GM23248 (cell line): ENCODE measurements at regions of chr12 and their contacts with region 1.

Region 1: GRCh38 chr12:55619354-55620138 is 17.1 kb upstream of the OR10P1 start:
- DNase-seq: peak; percentile 91
- H3K4me3 ChIP-seq: no peak overlapping the region
- H3K27ac ChIP-seq: no peak overlapping the region
- H3K4me1 ChIP-seq: no peaks in the 10 kb centered on the region
- H3K27me3 ChIP-seq: peaks cover 18% of the 10 kb centered on the region

Region 2: DNA sequence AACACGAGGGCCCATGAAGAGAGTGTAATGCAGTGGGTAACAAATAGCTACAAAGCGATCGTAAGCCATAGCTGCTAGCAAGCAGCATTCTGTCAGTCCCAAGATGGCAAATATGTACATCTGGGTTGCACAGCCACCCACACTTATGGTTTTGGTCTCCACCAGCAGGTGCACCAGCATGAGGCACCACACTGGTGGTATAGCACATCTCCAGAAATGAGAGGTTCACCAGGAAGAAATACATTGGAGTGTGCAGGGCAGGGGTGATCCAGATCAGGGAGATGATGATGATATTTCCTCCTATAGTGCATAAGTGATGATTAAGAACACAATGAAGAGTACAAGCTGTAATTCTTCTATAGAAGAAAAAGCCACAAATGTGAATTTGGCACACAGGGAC is 425.2 kb before region 1 on chr12:
- in situ Hi-C with region 1: loop called (anchors 10 kb)
- DNase-seq: no peak
- H3K4me3 ChIP-seq: no peak overlapping the region
- H3K27ac ChIP-seq: no peak overlapping the region
- H3K4me1 ChIP-seq: no peaks in the 10 kb centered on the region
- H3K27me3 ChIP-seq: no peaks in the 10 kb centered on the region